HEK293 (cell line): ENCODE measurements at regions of chr15 and their contacts with region 1.

Region 1: GRCh38 chr15:39756806-39757522 is 25.7 kb downstream of the FSIP1 start:
- H3K4me3 ChIP-seq: no peak overlapping the region
- H3K27ac ChIP-seq: no peak overlapping the region
- H3K4me1 ChIP-seq: no peaks in the 10 kb centered on the region
- CTCF ChIP-seq: no peak

Region 2: DNA sequence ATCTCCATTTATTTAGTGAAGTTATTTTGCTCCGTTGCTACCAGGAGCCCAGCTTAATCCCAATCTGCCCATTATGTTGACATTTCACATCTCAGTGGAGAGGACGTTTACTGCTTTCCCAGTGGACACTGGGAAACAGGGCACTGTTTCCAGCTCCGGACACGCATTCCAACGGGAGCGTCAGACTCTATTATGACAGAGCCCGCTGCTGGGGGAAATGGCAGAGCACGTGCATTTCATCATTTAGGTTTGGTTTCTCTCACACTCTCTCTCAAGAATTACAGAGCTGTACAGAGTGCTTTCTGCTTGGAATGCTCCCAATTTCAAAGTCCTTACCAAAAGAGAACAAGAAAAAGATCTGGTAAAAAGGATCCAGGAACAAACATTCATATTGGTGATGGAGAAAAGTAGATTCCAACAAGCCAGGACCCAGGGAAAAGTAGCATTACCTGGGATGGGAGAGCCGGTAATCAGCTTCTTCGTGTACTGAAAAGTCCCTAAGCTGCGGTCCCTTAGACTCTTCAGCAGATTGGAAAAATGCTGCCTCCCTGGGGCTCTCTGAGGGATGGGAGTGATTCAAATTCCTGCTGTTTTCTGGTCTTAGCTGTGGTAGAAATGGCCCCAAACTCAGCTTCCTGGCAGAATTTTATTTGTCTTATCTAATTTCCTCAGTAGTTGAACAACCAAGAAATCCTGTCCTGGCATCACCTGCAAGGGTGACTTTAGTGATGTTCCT is 312.1 kb before region 1 on chr15:
- CTCF ChIA-PET with region 1: no interaction called
- POLR2A ChIA-PET with region 1: no interaction called
- H3K4me3 ChIP-seq: no peak overlapping the region
- H3K27ac ChIP-seq: no peak overlapping the region
- H3K4me1 ChIP-seq: no peaks in the 10 kb centered on the region
- CTCF ChIP-seq: no peak

Region 3: GRCh38 chr15:39686000-39686613 is 70.9 kb before region 1 on chr15:
- CTCF ChIA-PET with region 1: interaction called, 106 read pairs
- POLR2A ChIA-PET with region 1: no interaction called
- H3K4me3 ChIP-seq: no peak overlapping the region
- H3K27ac ChIP-seq: no peak overlapping the region
- H3K4me1 ChIP-seq: no peaks in the 10 kb centered on the region
- CTCF ChIP-seq: peak; percentile 31; the same call in 1 of the 2 replicates

Region 4: GRCh38 chr15:39720621-39721611 is 36.0 kb before region 1 on chr15:
- CTCF ChIA-PET with region 1: interaction called, 12 read pairs
- POLR2A ChIA-PET with region 1: no interaction called
- H3K4me3 ChIP-seq: no peak overlapping the region
- H3K27ac ChIP-seq: no peak overlapping the region
- H3K4me1 ChIP-seq: peaks cover 3% of the 10 kb centered on the region; the same call in 1 of the 2 replicates
- CTCF ChIP-seq: no peak

Region 5: GRCh38 chr15:39767921-39768320 is 11.0 kb after region 1 on chr15:
- CTCF ChIA-PET with region 1: interaction called, 25 read pairs
- POLR2A ChIA-PET with region 1: no interaction called
- H3K4me3 ChIP-seq: no peak overlapping the region
- H3K27ac ChIP-seq: no peak overlapping the region
- H3K4me1 ChIP-seq: no peaks in the 10 kb centered on the region
- CTCF ChIP-seq: no peak

Region 6: GRCh38 chr15:39778021-39778420 is 21.1 kb after region 1 on chr15:
- CTCF ChIA-PET with region 1: no interaction called
- POLR2A ChIA-PET with region 1: no interaction called
- H3K4me3 ChIP-seq: no peak overlapping the region
- H3K27ac ChIP-seq: no peak overlapping the region
- H3K4me1 ChIP-seq: no peaks in the 10 kb centered on the region
- CTCF ChIP-seq: no peak